ENCODE measurements at regions of chr1 and their contacts with region 1.

Region 1: GRCh38 chr1:119647734-119648619 is at the start of gene ZNF697:
- DNase-seq: peak; percentile 98
- H3K4me3 ChIP-seq: peak within 1 kb of the TSS; percentile 53 to 99 (median 70)
- H3K27ac ChIP-seq: peak within 1 kb of the TSS; percentile 91
- H3K4me1 ChIP-seq: peaks cover 29% of the 10 kb centered on the region
- H3K27me3 ChIP-seq: peaks cover 0 to 3% of the 10 kb centered on the region in 2 experiments
- CTCF ChIP-seq: peak in 1 of 2 donors; percentile 71
- POLR2A ChIP-seq: peak; percentile 85
- total RNA-seq, gene ZNF697: 14.1 and 15.0 TPM in 2 replicates

Region 2: GRCh38 chr1:119631433-119632102 is 16.4 kb before region 1 on chr1:
- CTCF ChIA-PET with region 1: interaction called, 102 read pairs
- POLR2A ChIA-PET with region 1: interaction called, 21 read pairs
- dilution Hi-C with region 1: no loop called
- intact Hi-C with region 1: loop called (anchors 1 kb)
- DNase-seq: peak; percentile 92
- H3K4me3 ChIP-seq: peak overlapping the region in 1 of 3 experiments; percentile 20
- H3K27ac ChIP-seq: peak overlapping the region; percentile 91
- H3K4me1 ChIP-seq: peaks cover 63% of the 10 kb centered on the region
- H3K27me3 ChIP-seq: no peaks in the 10 kb centered on the region
- CTCF ChIP-seq: no peak
- POLR2A ChIP-seq: peak; percentile 64

Region 3: DNA sequence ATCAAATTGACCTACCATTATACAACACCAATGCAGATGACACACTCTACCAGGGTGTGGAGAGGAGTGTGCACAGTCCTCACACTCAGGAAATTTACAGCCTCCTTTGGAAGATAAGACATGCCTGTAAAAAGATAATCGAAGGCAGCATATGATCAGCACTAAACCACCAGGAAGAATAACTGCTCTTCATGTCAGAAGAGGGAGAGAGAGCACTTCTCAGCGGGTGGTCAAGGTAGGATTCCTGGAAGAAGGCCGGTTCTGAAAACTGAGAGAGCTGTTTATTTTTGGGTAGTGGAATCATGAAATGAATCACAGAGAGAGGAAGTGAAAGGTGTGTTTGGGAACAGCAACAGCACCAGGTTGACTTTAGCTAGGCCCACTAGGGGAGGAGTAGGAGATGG is 14.1 kb after region 1 on chr1:
- CTCF ChIA-PET with region 1: interaction called, 53 read pairs
- POLR2A ChIA-PET with region 1: interaction called, 5 read pairs
- dilution Hi-C with region 1: no loop called
- intact Hi-C with region 1: loop called (anchors 1 kb)
- DNase-seq: no peak
- H3K4me3 ChIP-seq: no peak overlapping the region
- H3K27ac ChIP-seq: no peak overlapping the region
- H3K4me1 ChIP-seq: no peaks in the 10 kb centered on the region
- H3K27me3 ChIP-seq: no peaks in the 10 kb centered on the region
- CTCF ChIP-seq: no peak
- POLR2A ChIP-seq: no peak

Region 4: DNA sequence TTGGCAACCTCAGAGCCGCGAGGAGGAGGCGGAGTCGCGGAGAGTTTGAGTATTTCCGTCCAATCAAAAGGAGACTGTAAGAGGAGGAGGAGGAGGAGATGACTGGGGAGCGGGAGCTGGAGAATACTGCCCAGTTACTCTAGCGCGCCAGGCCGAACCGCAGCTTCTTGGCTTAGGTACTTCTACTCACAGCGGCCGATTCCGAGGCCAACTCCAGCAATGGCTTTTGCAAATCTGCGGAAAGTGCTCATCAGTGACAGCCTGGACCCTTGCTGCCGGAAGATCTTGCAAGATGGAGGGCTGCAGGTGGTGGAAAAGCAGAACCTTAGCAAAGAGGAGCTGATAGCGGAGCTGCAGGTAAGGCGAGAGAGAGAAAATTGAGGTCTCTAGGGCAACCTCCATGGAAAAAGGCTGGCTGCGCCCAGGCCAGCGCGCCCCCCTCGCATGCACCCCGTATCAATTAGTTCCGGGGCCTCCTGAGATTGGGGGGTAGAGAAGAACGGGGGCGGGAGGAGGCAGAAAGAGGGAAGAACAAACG is 63.9 kb after region 1 on chr1 and contains the start of gene PHGDH:
- CTCF ChIA-PET with region 1: interaction called, 13 read pairs
- POLR2A ChIA-PET with region 1: interaction called, 3 read pairs
- dilution Hi-C with region 1: no loop called
- intact Hi-C with region 1: no loop called
- DNase-seq: peak; percentile 75
- H3K4me3 ChIP-seq: peak within 1 kb of the TSS; percentile 69 to 81 (median 69)
- H3K27ac ChIP-seq: peak within 1 kb of the TSS; percentile 51
- H3K4me1 ChIP-seq: peaks cover 9% of the 10 kb centered on the region
- H3K27me3 ChIP-seq: peaks cover 7 to 15% of the 10 kb centered on the region in 2 experiments
- CTCF ChIP-seq: no peak
- POLR2A ChIP-seq: peak; percentile 28
- total RNA-seq, gene PHGDH: 101 and 120 TPM in 2 replicates

Measured in endothelial cell of umbilical vein (primary cell).